Colonic mucosa (tissue), 4 donors: ENCODE measurements at regions of chr17 and their contacts with region 1.

Region 1: GRCh38 chr17:37373530-37374159 is 2.1 kb upstream of the C17orf78 start:
- DNase-seq: peak; percentile 77
- H3K4me3 ChIP-seq: no peak overlapping the region
- H3K27ac ChIP-seq: no peak overlapping the region
- H3K4me1 ChIP-seq: no peaks in the 10 kb centered on the region
- H3K27me3 ChIP-seq: no peaks in the 10 kb centered on the region
- CTCF ChIP-seq: peak; percentile 96

Region 2: DNA sequence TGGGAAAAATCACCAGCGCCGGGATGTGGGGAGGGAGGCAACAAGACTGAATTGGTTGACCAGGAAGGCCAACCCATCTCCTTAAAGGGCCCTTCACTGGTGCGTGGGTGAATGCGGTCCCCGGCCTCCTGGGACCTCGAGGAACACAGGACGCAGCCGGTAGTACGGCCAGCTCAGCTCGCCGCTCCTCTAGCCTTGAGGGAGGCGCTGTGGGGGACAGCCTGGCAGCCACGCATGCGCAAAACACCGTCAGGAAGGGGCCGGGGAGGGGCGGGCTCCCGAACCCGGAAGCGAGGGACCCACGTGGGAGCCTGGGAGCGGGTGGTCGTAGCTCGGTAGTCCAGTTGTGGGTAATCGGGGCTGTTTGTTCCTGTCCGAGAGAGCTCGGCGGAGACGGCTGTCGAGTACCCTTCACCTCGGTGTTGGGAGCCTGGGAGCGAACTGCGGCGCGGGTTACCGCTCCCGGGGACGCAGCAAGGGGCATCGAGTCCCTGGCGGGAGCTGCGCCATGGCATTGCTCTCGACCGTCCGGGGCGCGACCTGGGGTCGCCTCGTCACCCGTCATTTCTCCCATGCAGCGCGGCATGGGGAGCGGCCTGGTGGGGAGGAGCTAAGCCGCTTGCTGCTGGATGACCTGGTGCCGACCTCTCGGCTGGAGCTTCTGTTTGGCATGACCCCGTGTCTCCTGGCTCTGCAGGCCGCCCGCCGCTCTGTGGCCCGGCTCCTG is 772.2 kb before region 1 on chr17 and contains the start of gene MRM1:
- intact Hi-C with region 1: loop called (anchors 10 kb)
- DNase-seq: peak; percentile 95
- H3K4me3 ChIP-seq: peak within 1 kb of the TSS; percentile 76
- H3K27ac ChIP-seq: peak within 1 kb of the TSS; percentile 68
- H3K4me1 ChIP-seq: peaks cover 19% of the 10 kb centered on the region
- H3K27me3 ChIP-seq: no peaks in the 10 kb centered on the region
- CTCF ChIP-seq: no peak
- total RNA-seq, gene MRM1: 6.2 to 26.5 TPM

Region 3: DNA sequence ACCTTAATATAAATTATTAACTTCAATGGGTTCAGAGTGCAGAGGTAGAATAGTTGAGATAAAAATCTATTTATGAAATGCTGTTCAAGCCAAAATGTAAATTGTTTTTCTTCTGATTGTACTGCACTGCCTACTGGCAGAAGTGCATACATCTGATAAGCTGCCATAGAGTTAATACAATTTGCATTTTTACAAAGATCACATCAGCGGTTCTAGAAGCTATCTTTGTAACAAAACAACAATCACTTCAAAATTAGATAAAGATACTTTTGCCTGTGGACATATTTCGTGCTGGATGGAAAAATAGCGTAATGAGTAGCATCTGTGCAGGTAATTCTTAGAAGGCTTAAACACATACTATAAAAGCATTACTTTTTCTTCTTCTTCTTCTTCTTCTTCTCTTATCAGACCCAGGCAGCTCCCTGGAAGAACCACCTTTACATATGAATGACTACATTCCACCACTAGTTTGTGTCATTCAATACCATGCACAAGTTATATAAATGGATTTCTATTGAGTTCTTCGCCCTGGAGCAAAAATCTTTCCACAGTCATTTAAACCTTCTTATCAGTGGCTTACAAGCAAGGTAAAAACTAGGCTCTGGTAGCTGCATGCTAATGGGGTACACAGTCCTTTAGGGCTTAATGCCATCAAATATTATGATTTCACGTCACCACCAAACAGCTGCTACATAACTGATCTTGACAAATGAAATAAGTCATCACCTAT is 188.5 kb after region 1 on chr17:
- intact Hi-C with region 1: no loop called
- DNase-seq: no peak
- H3K4me3 ChIP-seq: no peak overlapping the region
- H3K27ac ChIP-seq: no peak overlapping the region
- H3K4me1 ChIP-seq: no peaks in the 10 kb centered on the region
- H3K27me3 ChIP-seq: no peaks in the 10 kb centered on the region
- CTCF ChIP-seq: no peak